Ascending aorta (tissue), 2 donors: ENCODE measurements at regions of chr1 and their contacts with region 1.

Region 1: DNA sequence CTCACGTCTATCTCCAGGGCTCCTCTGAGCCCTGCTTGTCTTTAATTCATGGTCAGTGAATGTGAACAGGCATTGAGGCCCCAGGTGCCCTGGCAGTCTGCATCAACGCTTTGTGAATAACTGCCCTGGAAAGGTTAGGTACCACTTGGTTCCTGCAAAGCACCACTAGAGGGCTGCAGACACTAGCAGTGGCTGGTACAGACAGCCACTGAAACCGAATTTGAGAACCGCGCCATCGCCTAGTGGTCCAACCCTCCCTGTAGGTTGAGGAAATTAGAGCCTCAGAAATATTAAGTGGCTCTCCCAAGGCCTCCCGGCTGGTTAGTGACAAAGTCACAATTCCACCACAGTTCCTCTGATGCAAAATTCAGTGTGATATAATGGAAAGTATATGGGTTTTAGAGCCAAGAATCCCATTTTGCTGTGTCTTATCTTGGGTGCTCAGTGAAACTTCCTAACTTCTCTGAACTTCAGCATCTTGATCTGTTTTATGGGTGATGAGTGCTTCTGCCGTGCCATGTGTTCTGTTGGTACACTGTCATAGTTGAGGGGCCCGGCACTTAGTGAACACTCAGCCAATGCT is 46.2 kb upstream of the BCL9 start:
- DNase-seq: peak; percentile 19 to 86
- H3K4me3 ChIP-seq: no peak overlapping the region
- H3K27ac ChIP-seq: no peak overlapping the region
- H3K4me1 ChIP-seq: no peaks in the 10 kb centered on the region
- H3K27me3 ChIP-seq: no peaks in the 10 kb centered on the region
- CTCF ChIP-seq: peak; percentile 76 to 93 (median 86)

Region 2: GRCh38 chr1:147627435-147628110 is 132.5 kb after region 1 on chr1:
- intact Hi-C with region 1: loop called (anchors 1 kb)
- DNase-seq: peak in 1 of 2 donors; percentile 73
- H3K4me3 ChIP-seq: no peak overlapping the region
- H3K27ac ChIP-seq: no peak overlapping the region
- H3K4me1 ChIP-seq: no peaks in the 10 kb centered on the region
- H3K27me3 ChIP-seq: no peaks in the 10 kb centered on the region
- CTCF ChIP-seq: peak; percentile 71 to 93 (median 84)

Region 3: GRCh38 chr1:147640553-147641165 is 145.6 kb after region 1 on chr1:
- intact Hi-C with region 1: loop called (anchors 1 kb)
- DNase-seq: peak in 1 of 2 donors; percentile 71
- H3K4me3 ChIP-seq: no peak overlapping the region
- H3K27ac ChIP-seq: no peak overlapping the region
- H3K4me1 ChIP-seq: no peaks in the 10 kb centered on the region
- H3K27me3 ChIP-seq: no peaks in the 10 kb centered on the region
- CTCF ChIP-seq: peak; percentile 16 to 58 (median 57)

Region 4: DNA sequence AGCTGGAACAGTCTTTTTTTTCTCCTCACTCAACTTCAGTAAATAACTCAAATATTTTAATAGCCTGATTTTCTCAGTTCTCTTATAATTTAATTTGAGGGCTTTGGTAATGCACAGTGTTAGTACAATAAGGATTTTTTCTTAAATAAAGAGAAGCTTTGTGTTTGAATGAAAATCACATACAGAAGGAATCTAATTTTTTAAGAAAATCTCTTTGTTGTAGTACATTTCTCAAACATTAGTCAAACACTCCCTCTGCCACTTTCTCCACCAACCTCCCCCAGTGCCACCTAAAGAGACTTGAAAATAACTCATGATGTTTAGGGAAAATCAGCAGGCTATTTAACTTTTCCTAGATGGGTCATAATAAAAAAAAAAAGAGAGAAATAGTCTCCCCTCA is 217.5 kb after region 1 on chr1:
- intact Hi-C with region 1: no loop called
- DNase-seq: no peak
- H3K4me3 ChIP-seq: no peak overlapping the region
- H3K27ac ChIP-seq: no peak overlapping the region
- H3K4me1 ChIP-seq: no peaks in the 10 kb centered on the region
- H3K27me3 ChIP-seq: no peaks in the 10 kb centered on the region
- CTCF ChIP-seq: no peak